HepG2 (cell line): ENCODE measurements at regions of chr2 and their contacts with region 1.

Region 1: DNA sequence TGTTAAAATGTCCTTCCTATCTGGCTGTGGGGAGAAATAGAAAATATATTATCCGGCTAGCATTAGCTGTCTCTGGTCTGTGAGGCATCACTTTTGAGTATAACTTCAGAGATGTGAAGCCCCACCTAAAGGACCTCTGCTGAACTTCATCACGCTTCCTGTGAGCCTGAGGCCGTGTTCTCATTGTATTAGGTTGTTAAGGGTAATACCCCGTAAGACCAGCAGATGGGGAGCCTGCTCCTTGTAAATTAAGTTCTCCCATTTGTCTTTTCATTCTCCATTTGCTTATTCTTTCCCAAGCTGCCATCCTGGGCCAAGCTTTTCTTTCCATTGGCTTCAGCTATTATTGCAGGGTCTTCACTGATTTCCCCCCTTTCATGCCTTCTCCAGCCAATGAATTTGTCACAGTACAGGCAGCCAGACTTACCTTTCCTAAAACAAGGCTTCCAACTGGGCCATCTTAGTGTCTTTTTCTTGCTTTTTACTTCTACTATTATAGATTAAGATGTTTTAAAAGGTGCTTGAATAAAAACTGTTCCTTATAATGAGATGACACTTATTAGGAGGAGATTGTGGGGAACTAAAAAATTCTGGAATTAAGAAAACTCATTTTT is 12.4 kb downstream of the NIF3L1 start:
- DNase-seq: peak; percentile 94
- ATAC-seq: peak; percentile 97
- H3K4me3 ChIP-seq: no peak overlapping the region
- H3K27ac ChIP-seq: no peak overlapping the region
- H3K4me1 ChIP-seq: no peaks in the 10 kb centered on the region
- H3K27me3 ChIP-seq: no peaks in the 10 kb centered on the region
- CTCF ChIP-seq: peak; percentile 92
- EP300 ChIP-seq: no peak
- POLR2A ChIP-seq: no peak
- RAD21 ChIP-seq: peak; percentile 87

Region 2: GRCh38 chr2:201122276-201122675 is 220.7 kb after region 1 on chr2:
- CTCF ChIA-PET with region 1: no interaction called
- POLR2A ChIA-PET with region 1: no interaction called
- in situ Hi-C with region 1: no loop called
- intact Hi-C with region 1: no loop called
- DNase-seq: no peak
- ATAC-seq: no peak
- H3K4me3 ChIP-seq: no peak overlapping the region
- H3K27ac ChIP-seq: peak overlapping the region; percentile 2
- H3K4me1 ChIP-seq: peaks cover 85% of the 10 kb centered on the region
- H3K27me3 ChIP-seq: no peaks in the 10 kb centered on the region; a peak in 2 of 5 replicates
- CTCF ChIP-seq: no peak
- EP300 ChIP-seq: no peak
- POLR2A ChIP-seq: no peak
- RAD21 ChIP-seq: no peak

Region 3: GRCh38 chr2:201176081-201176481 is 274.5 kb after region 1 on chr2:
- CTCF ChIA-PET with region 1: interaction called, 30 read pairs
- POLR2A ChIA-PET with region 1: interaction called, 9 read pairs
- in situ Hi-C with region 1: loop called (anchors 5 kb)
- intact Hi-C with region 1: loop called (anchors 1 kb)
- DNase-seq: peak; percentile 21
- ATAC-seq: no peak
- H3K4me3 ChIP-seq: no peak overlapping the region; a peak in 1 of 6 replicates
- H3K27ac ChIP-seq: no peak overlapping the region
- H3K4me1 ChIP-seq: peaks cover 33% of the 10 kb centered on the region
- H3K27me3 ChIP-seq: no peaks in the 10 kb centered on the region
- CTCF ChIP-seq: no peak
- EP300 ChIP-seq: no peak
- POLR2A ChIP-seq: no peak
- RAD21 ChIP-seq: no peak

Region 4: DNA sequence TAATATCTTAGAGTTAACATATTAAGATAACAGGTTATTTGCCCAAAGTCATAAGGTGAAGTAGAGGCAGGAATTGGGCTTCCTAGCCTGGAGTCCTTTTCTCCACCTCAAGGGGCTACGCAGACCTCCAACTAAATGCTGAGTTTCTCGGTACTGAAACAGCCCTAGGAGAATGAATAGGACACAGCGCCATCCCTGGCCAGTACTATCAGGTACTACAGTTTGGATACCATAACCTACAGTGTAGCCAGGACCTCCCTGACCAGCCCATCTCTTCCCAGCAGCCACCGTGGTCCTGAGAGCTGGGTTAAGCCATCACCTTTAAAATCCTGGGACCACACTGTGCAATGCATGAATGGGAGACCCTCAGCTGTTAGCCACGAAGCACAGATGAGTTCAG is 374.4 kb after region 1 on chr2:
- CTCF ChIA-PET with region 1: no interaction called
- POLR2A ChIA-PET with region 1: no interaction called
- in situ Hi-C with region 1: no loop called
- intact Hi-C with region 1: no loop called
- DNase-seq: no peak
- ATAC-seq: peak; percentile 76
- H3K4me3 ChIP-seq: no peak overlapping the region
- H3K27ac ChIP-seq: no peak overlapping the region
- H3K4me1 ChIP-seq: 0 out of 2 replicates have a peak, but pooled peaks cover 5% of the 10 kb centered on the region
- H3K27me3 ChIP-seq: no peaks in the 10 kb centered on the region
- CTCF ChIP-seq: 0 out of 2 replicates have a peak, but pooled peaks have one; percentile 7
- EP300 ChIP-seq: no peak
- POLR2A ChIP-seq: no peak
- RAD21 ChIP-seq: no peak